ENCODE measurements at regions of chr12 and their contacts with region 1.

Region 1: GRCh38 chr12:32533971-32534590 is 134.7 kb downstream of the FGD4 start:
- DNase-seq: no peak

Region 2: GRCh38 chr12:32482226-32482625 is 51.9 kb before region 1 on chr12:
- intact Hi-C with region 1: loop called (anchors 10 kb)
- DNase-seq: no peak

Region 3: DNA sequence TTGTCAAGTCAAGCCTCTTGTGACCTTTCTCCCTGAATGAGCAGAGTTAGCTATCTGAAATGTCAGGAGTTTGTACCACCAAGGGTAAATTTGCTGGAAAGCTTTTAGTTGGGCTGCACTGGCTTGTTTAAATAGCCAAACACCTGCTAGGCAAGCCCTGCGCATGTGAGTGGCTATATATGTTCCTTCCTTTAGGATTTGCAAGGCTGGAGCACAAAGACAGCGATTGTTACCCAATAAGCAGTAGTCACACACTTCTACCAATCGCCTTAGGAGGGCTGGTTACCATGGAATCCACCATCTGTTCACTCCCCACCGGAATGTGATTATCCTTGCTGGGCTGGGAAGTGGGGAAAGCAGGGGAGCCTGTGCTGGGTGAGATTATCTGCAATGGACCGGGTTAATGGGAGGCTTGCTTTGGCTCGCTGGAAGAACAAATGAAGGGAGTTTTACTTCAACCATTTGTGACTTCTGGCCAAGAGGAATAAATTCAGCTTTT is 32.2 kb before region 1 on chr12:
- intact Hi-C with region 1: no loop called
- DNase-seq: no peak

Region 4: DNA sequence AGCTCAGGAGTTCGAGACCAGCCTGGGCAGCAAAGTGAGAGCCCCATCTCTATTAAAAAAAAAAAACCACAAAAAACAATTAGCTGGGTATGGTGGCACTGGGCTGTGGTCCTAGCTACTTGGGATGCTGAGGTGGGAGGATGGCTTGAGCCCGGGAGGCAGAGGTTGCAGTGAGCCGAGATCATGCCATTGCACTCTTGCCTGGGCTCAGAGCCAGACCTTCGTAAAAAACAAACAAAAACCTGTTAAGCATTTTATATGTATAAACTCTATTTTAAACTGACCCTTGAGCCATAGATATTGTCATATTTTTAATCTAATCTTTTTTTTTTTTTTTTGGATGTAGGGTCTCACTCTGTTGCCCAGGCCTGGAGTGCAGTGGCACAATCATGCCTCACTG is 180.7 kb after region 1 on chr12:
- intact Hi-C with region 1: no loop called
- DNase-seq: no peak

Measured in cardiac septum (tissue), 1 donor.